ENCODE measurements at regions of chr2 and their contacts with region 1.

Region 1: GRCh38 chr2:197159661-197160211 is 150.8 kb downstream of the ANKRD44 start:
- DNase-seq: no peak
- ATAC-seq: peak; percentile 37
- H3K4me3 ChIP-seq: no peak overlapping the region
- H3K27ac ChIP-seq: no peak overlapping the region
- H3K4me1 ChIP-seq: peaks cover 23% of the 10 kb centered on the region; the same call in 1 of the 2 replicates
- H3K27me3 ChIP-seq: no peaks in the 10 kb centered on the region
- CTCF ChIP-seq: no peak
- EP300 ChIP-seq: no peak
- POLR2A ChIP-seq: no peak
- RAD21 ChIP-seq: no peak

Region 2: GRCh38 chr2:195722075-195722474 is 1437.7 kb before region 1 on chr2:
- CTCF ChIA-PET with region 1: no interaction called
- POLR2A ChIA-PET with region 1: no interaction called
- RAD21 ChIA-PET with region 1: no interaction called
- SMC1A ChIA-PET with region 1: no interaction called
- in situ Hi-C with region 1: no loop called
- intact Hi-C with region 1: no loop called
- DNase-seq: no peak
- ATAC-seq: no peak
- H3K4me3 ChIP-seq: no peak overlapping the region
- H3K27ac ChIP-seq: no peak overlapping the region
- H3K4me1 ChIP-seq: no peaks in the 10 kb centered on the region
- H3K27me3 ChIP-seq: no peaks in the 10 kb centered on the region
- CTCF ChIP-seq: no peak
- EP300 ChIP-seq: no peak
- POLR2A ChIP-seq: no peak
- RAD21 ChIP-seq: no peak

Region 3: GRCh38 chr2:196836440-196836839 is 323.3 kb before region 1 on chr2:
- CTCF ChIA-PET with region 1: no interaction called
- POLR2A ChIA-PET with region 1: no interaction called
- RAD21 ChIA-PET with region 1: no interaction called
- SMC1A ChIA-PET with region 1: no interaction called
- in situ Hi-C with region 1: no loop called
- intact Hi-C with region 1: no loop called
- DNase-seq: no peak
- ATAC-seq: no peak
- H3K4me3 ChIP-seq: no peak overlapping the region
- H3K27ac ChIP-seq: no peak overlapping the region
- H3K4me1 ChIP-seq: no peaks in the 10 kb centered on the region
- H3K27me3 ChIP-seq: no peaks in the 10 kb centered on the region
- CTCF ChIP-seq: no peak
- EP300 ChIP-seq: no peak
- POLR2A ChIP-seq: no peak
- RAD21 ChIP-seq: no peak

Region 4: DNA sequence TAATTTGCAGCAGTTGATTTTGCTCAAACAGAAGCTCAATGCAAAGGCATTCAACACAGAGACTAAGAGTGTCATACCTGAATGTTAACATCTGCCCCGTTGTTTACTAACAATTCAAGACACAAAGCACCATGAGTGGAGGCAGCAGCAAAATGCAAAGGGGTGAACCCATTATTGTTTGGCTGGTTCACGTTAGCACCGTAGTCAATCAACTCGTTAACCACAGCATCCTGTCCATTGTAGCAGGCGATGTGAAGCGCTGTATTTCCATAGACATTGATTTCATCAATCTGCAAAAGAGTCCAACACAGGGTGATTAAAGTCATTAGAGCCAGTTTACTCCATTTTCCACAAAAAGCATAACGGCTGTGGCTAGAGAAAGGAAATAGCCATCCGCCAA is 38.5 kb before region 1 on chr2:
- CTCF ChIA-PET with region 1: interaction called, 398 read pairs
- POLR2A ChIA-PET with region 1: no interaction called
- RAD21 ChIA-PET with region 1: interaction called, 4 read pairs
- SMC1A ChIA-PET with region 1: interaction called, 478 read pairs
- in situ Hi-C with region 1: no loop called
- intact Hi-C with region 1: no loop called
- DNase-seq: no peak
- ATAC-seq: no peak
- H3K4me3 ChIP-seq: no peak overlapping the region
- H3K27ac ChIP-seq: no peak overlapping the region
- H3K4me1 ChIP-seq: no peaks in the 10 kb centered on the region
- H3K27me3 ChIP-seq: no peaks in the 10 kb centered on the region
- CTCF ChIP-seq: no peak
- EP300 ChIP-seq: no peak
- POLR2A ChIP-seq: no peak
- RAD21 ChIP-seq: no peak

Region 5: DNA sequence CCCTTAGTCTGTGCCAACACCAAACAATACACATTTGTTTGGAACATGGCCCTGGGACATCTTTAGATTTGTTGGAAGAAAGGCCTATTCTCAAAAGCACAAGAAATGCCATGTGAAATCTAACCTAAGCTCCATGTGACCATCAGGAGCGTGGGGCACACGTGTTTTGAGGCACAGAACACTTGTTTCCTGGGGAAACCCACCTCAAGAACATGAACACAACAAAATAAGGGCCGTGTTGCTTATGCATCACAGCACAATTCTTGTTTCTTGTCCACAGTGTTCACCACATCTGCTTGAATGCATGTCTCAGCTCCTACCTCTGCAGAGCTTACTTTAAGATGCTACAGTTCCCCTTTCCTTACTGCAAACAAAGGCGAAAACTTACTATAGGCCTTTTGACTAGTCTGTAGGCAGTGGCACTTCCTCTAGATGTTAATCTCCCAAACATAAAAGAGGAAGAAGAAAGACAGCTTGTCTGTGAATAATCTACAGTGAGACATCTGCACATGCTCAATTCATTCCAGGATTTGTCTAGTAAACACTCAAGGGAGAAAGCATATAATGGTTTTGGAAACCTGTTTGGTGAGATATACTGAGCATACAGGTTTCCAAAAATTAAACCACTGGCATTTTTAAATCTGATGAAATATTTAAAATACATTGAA is 14.1 kb before region 1 on chr2:
- CTCF ChIA-PET with region 1: interaction called, 5 read pairs
- POLR2A ChIA-PET with region 1: interaction called, 4 read pairs
- RAD21 ChIA-PET with region 1: interaction called, 3 read pairs
- SMC1A ChIA-PET with region 1: interaction called, 24 read pairs
- in situ Hi-C with region 1: no loop called
- intact Hi-C with region 1: no loop called
- DNase-seq: peak; percentile 89
- ATAC-seq: peak; percentile 95
- H3K4me3 ChIP-seq: no peak overlapping the region
- H3K27ac ChIP-seq: peak overlapping the region; percentile 32
- H3K4me1 ChIP-seq: peaks cover 42% of the 10 kb centered on the region
- H3K27me3 ChIP-seq: no peaks in the 10 kb centered on the region
- CTCF ChIP-seq: no peak
- EP300 ChIP-seq: peak; percentile 31 to 69; a peak in 1 of 4 replicates
- POLR2A ChIP-seq: peak; percentile 51; the same call in 1 of the 2 replicates
- RAD21 ChIP-seq: 0 out of 2 replicates have a peak, but pooled peaks have one; percentile 1

Region 6: GRCh38 chr2:197442857-197443256 is 283.1 kb after region 1 on chr2:
- CTCF ChIA-PET with region 1: no interaction called
- POLR2A ChIA-PET with region 1: no interaction called
- RAD21 ChIA-PET with region 1: no interaction called
- SMC1A ChIA-PET with region 1: no interaction called
- in situ Hi-C with region 1: no loop called
- intact Hi-C with region 1: no loop called
- DNase-seq: no peak
- ATAC-seq: peak; percentile 24; the same call in 1 of the 3 replicates
- H3K4me3 ChIP-seq: no peak overlapping the region
- H3K27ac ChIP-seq: no peak overlapping the region
- H3K4me1 ChIP-seq: no peaks in the 10 kb centered on the region
- H3K27me3 ChIP-seq: no peaks in the 10 kb centered on the region
- CTCF ChIP-seq: no peak
- EP300 ChIP-seq: no peak
- POLR2A ChIP-seq: no peak
- RAD21 ChIP-seq: no peak

Measured in GM12878 (cell line).